ENCODE measurements at regions of chr3 and their contacts with region 1.

Region 1: GRCh38 chr3:69200384-69201068 is 78.1 kb upstream of the LMOD3 start:
- DNase-seq: peak; percentile 68
- H3K4me3 Mint-ChIP-seq: peak overlapping the region; percentile 85
- H3K27ac Mint-ChIP-seq: peak overlapping the region; percentile 97
- H3K4me1 Mint-ChIP-seq: peaks cover 69% of the 10 kb centered on the region
- H3K27me3 Mint-ChIP-seq: no peaks in the 10 kb centered on the region

Region 2: DNA sequence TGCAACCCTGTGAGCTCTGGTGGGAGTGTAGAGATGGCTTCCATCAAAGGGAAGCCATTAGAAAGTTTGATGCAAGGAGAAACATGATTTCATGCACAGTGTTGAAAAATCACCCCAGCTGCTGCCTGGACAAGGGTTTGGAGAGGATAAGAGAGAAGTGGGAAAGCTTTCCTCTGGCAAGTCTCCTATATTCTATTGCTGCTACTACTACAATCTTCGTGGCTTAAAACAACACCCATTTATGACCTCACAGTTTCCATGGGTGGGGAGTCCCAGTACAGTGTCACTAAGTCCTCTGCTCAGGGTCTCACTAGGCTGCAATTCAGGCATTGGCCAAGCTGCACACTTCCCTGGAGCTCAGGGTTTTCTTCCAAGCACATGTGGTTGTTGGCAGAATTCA is 497.5 kb before region 1 on chr3:
- CTCF ChIA-PET with region 1: no interaction called
- POLR2A ChIA-PET with region 1: no interaction called
- DNase-seq: no peak
- H3K4me3 Mint-ChIP-seq: no peak overlapping the region
- H3K27ac Mint-ChIP-seq: no peak overlapping the region
- H3K4me1 Mint-ChIP-seq: no peaks in the 10 kb centered on the region
- H3K27me3 Mint-ChIP-seq: no peaks in the 10 kb centered on the region

Region 3: DNA sequence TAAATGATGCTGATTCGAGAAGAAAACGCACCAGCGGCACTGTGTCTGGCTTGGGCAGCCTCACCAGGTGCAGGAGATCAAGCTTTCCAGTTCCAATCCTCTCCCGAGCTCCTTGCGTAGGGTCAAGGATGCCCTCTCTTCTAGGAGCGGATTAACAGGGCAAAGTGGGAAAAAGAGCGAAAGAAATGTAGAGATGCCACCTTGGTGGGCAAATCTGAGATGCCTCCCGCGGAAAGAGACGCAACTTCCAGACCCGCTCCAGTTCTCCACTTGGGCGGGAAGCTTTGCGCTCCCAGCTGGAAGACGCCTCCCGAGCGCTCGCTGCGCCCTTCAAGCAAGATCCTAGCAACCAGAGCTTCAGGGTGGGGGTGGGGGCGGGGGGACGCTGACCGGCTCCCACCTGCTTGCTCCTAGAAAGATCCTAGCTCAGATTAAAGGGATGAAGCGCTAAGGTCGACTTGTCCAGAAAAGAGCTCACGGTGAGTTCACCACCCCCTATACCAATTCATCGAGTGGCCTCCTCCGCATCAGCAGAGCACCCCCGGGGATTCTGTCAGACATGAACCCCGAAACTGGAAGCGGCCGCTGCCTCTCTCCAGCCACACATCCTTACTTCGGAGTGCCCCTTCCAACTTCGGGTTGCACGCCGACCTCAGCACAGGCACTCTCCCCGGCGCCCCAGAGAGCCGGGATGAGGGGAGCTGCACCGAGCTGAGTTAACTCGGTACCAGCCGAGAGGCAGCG is 268.9 kb before region 1 on chr3:
- CTCF ChIA-PET with region 1: no interaction called
- POLR2A ChIA-PET with region 1: no interaction called
- DNase-seq: no peak
- H3K4me3 Mint-ChIP-seq: no peak overlapping the region
- H3K27ac Mint-ChIP-seq: no peak overlapping the region
- H3K4me1 Mint-ChIP-seq: no peaks in the 10 kb centered on the region
- H3K27me3 Mint-ChIP-seq: peaks cover 62% of the 10 kb centered on the region

Region 4: DNA sequence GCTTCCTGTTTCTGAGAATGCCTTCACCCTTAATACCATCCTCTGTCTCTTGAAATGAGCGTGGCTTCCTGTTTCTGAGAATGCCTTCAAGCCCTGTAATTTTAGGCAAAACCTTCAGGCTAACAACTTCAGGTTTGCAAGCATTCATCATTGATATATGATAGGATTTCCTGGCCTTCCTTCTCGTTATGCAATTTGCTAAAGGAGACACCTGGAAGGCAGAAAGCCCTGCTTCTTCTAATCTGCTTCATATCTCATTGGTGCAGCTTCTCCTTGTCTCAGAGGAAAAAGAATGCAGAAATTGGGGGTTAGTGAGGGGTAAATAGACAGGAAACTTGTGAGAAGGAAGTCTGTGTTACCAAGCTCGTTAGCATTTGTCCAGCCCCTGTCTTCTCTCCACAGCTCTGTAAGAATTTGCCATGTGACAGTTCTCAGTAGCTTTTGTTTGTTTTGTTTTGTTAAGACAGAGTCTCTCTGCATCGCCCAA is 108.5 kb before region 1 on chr3:
- CTCF ChIA-PET with region 1: interaction called, 3 read pairs
- POLR2A ChIA-PET with region 1: interaction called, 40 read pairs
- DNase-seq: no peak
- H3K4me3 Mint-ChIP-seq: peak overlapping the region; percentile 58
- H3K27ac Mint-ChIP-seq: peak overlapping the region; percentile 94
- H3K4me1 Mint-ChIP-seq: peaks cover 83% of the 10 kb centered on the region
- H3K27me3 Mint-ChIP-seq: no peaks in the 10 kb centered on the region

Region 5: DNA sequence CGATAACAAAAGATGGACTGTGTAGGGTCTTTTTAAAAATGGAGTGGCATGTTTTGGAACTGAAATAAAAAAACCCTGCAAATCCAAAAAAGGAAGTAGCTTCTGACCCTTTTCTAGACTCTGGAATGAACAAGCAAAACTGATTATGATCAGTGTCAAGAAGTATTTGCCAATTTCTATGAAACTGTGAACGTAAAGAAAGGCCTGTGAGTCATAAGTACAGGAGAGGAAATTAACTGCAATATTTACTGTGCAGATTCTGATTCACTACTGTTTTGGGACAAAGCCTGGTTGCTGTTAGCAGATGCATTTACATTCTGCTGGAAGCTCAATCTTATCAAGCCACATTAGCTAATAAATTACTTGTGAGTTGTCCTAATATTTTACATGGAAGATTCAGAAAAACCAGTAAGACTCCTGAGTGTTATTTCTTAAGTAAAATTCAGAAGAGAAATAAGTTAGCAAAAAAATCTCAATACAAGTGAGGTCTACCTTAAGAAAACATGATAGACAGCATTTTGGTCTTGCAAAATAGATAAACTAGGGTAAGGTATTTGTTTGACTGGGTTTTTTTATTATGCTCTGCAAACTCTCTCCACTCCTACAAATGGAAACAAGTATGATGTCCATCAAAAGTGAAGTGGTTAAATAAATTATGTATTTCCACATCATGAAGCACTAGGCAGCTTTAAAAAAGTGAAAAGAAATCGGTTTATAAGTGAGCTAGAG is 12.0 kb after region 1 on chr3:
- CTCF ChIA-PET with region 1: interaction called, 5 read pairs
- POLR2A ChIA-PET with region 1: interaction called, 115 read pairs
- DNase-seq: no peak
- H3K4me3 Mint-ChIP-seq: peak overlapping the region; percentile 2
- H3K27ac Mint-ChIP-seq: peak overlapping the region; percentile 87
- H3K4me1 Mint-ChIP-seq: peaks cover 58% of the 10 kb centered on the region
- H3K27me3 Mint-ChIP-seq: no peaks in the 10 kb centered on the region

Region 6: DNA sequence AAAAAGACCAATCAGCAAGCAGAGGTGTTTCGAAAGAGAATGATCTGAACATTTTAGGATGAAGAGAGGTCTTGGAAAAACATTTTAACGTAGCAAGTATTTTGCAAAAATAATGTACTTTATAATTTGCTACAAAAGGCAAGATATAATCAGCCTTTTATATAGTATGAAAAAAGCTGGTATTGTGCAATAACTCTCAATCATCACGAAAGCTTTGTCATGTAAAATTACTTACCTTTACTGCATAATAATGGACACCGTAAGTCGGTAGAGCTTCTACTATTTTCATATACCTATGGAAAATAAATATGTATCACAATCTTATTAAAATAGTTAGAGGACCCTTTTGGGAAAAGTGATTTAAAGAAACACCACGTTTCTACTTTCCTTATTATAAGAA is 17.6 kb after region 1 on chr3:
- CTCF ChIA-PET with region 1: interaction called, 5 read pairs
- POLR2A ChIA-PET with region 1: interaction called, 115 read pairs
- DNase-seq: no peak
- H3K4me3 Mint-ChIP-seq: no peak overlapping the region
- H3K27ac Mint-ChIP-seq: no peak overlapping the region
- H3K4me1 Mint-ChIP-seq: peaks cover 34% of the 10 kb centered on the region
- H3K27me3 Mint-ChIP-seq: no peaks in the 10 kb centered on the region

Region 7: GRCh38 chr3:69236812-69237707 is 36.5 kb after region 1 on chr3:
- CTCF ChIA-PET with region 1: interaction called, 6 read pairs
- POLR2A ChIA-PET with region 1: interaction called, 41 read pairs
- DNase-seq: no peak
- H3K4me3 Mint-ChIP-seq: peak overlapping the region; percentile 70
- H3K27ac Mint-ChIP-seq: peak overlapping the region; percentile 48
- H3K4me1 Mint-ChIP-seq: peaks cover 30% of the 10 kb centered on the region
- H3K27me3 Mint-ChIP-seq: no peaks in the 10 kb centered on the region

Region 8: GRCh38 chr3:69250014-69250413 is 49.5 kb after region 1 on chr3:
- CTCF ChIA-PET with region 1: interaction called, 5 read pairs
- POLR2A ChIA-PET with region 1: interaction called, 20 read pairs
- DNase-seq: peak; percentile 72
- H3K4me3 Mint-ChIP-seq: peak overlapping the region; percentile 71
- H3K27ac Mint-ChIP-seq: peak overlapping the region; percentile 44
- H3K4me1 Mint-ChIP-seq: peaks cover 10% of the 10 kb centered on the region
- H3K27me3 Mint-ChIP-seq: peaks cover 7% of the 10 kb centered on the region

Measured in activated CD4-positive, alpha-beta memory T cell treated with anti-CD3 and anti-CD28 coated beads, Interleukin-2, amount 10 ng/mL, durations not matched to agents 7 days and 5 days (primary cell).